Brain microvascular endothelial cell (primary cell): ENCODE measurements at regions of chr1 and their contacts with region 1.

Region 1: DNA sequence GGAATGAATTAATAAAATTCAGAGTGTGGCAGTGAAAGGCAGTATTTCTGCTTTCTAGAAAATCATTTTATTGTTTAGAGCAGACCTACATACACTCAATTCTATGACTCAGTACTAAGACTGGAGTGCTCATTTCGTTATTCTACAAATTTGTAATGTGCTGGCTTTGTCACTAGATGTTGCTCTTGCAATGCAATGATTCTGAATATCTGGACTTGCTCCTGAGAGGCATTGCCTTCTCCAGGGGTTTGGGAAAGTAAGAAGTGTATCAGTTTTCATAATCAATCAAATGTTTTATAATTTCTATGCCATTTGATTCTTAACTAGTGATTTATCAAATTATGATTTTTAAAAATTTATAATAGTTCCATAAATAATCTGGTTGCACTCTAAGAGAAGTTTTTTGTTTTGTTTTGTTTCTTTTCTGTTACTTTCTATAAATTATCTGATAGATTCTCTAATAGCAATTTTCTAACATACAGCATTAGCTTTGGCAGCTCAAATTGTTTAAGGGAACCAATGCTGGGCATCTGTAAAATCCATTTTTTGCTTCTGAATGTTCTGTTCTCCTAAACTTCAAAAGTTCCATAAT is 280.5 kb upstream of the SGIP1 start:
- DNase-seq: peak; percentile 63
- H3K4me3 ChIP-seq: no peak overlapping the region
- H3K27ac ChIP-seq: no peak overlapping the region
- H3K27me3 ChIP-seq: no peaks in the 10 kb centered on the region
- CTCF ChIP-seq: peak; percentile 76

Region 2: GRCh38 chr1:66380452-66381212 is 127.2 kb after region 1 on chr1:
- in situ Hi-C with region 1: no loop called
- DNase-seq: no peak
- H3K4me3 ChIP-seq: no peak overlapping the region
- H3K27ac ChIP-seq: no peak overlapping the region
- H3K27me3 ChIP-seq: no peaks in the 10 kb centered on the region
- CTCF ChIP-seq: no peak

Region 3: DNA sequence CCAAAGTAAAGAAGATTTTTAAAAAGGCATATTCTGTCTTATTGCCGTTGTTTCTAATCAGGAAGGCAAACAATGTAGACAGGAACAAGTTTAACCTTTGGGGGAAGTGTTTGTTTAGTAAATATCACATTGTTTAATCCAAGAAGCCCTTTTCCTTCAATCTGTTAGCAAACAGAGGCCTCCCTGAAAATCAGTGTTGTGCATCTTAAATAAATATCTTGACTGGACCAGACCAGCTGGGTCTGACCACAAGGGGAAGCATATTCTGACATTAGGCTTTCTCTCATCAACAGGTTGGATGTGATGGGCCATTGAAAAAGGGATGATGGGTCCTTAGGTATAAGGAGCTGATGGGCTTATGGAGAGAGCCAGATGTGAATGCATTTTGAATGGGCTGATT is 198.7 kb after region 1 on chr1:
- in situ Hi-C with region 1: loop called (anchors 10 kb)
- DNase-seq: no peak
- H3K4me3 ChIP-seq: no peak overlapping the region
- H3K27ac ChIP-seq: no peak overlapping the region
- H3K27me3 ChIP-seq: no peaks in the 10 kb centered on the region
- CTCF ChIP-seq: peak; percentile 48